Psoas muscle (tissue), 8 donors: ENCODE measurements at regions of chr1 and their contacts with region 1.

Region 1: DNA sequence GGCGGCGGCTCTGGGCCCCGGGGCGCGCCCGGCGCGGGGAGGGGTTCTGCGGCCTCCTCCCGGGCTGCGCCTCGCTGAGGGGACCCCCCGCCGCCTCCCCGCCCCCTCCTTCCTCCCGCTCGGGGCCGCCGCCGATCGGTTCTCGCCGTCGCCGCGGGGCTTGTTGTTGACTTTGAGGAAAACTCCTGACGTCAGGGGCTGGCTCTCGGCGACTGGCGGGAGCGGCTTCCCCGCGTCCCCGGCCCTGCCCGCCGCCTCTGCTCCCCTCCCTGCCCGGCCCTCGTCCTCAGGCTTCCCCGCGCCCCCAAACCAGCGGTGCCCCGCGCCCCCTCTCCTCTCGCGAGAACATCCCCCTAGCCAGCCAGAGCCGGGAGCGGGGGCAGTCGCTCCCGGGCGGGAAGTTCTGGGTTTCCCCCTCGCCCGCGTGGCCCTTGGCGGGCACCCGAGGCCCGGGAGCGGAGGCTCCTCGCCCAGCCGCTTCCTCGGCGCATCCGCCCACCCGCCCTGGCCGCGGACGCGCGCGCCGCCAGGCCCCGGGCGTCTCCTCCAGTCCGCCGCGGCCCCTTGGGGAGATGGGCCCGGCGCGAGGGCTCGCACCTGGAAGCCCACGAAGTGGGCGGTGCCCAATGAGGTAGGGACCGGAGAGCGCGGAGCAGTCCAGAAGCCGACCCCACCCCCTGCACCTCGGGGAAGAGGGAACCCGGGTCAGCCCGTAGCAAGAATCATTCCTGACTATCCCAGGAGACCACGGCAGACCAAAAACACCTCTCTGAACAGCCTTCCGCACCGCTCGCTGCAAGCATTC is 611 bp upstream of the AKT3 start:
- DNase-seq: peak; percentile 77 to 87
- ATAC-seq: peak; percentile 57 to 65 (median 62)
- H3K4me3 ChIP-seq: peak overlapping the region; percentile 86
- H3K27ac ChIP-seq: peak overlapping the region; percentile 92
- H3K4me1 ChIP-seq: peaks cover 2% of the 10 kb centered on the region
- H3K27me3 ChIP-seq: no peaks in the 10 kb centered on the region
- CTCF ChIP-seq: no peak

Region 2: DNA sequence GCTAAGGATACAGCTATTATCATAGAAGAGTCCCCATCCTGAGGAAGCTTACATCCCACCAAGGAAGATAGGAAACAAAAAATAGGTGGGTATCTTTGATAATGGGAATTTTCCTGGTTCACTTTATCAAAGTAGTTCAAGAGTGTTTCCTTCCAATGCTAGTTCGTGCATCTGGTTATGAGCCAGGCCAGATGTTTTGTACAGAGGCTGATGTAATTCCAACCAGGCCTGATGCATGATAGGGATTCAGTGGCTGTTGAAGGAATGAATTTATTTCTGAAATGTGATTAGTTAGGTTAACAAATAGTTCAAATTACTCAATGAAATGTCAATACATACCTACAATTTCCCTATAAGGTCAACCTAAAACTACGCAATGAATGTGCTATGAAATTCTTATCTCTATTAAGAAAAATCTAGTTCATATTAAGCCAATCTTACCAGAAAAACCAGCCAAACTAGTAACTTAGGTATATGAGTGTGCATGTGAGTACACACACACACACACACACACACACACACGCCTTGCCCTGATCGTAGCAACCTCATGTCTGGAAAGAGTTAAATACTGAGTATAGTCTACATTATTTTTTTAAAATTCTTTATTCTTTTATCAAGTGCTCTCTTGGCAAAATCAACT is 190.9 kb after region 1 on chr1:
- intact Hi-C with region 1: loop called in 1 of 2 experiments (anchors 5 kb)
- DNase-seq: no peak
- ATAC-seq: no peak
- H3K4me3 ChIP-seq: no peak overlapping the region
- H3K27ac ChIP-seq: no peak overlapping the region
- H3K4me1 ChIP-seq: peaks cover 1% of the 10 kb centered on the region
- H3K27me3 ChIP-seq: no peaks in the 10 kb centered on the region
- CTCF ChIP-seq: no peak